BJ (cell line): ENCODE measurements at regions of chr22 and their contacts with region 1.

Region 1: DNA sequence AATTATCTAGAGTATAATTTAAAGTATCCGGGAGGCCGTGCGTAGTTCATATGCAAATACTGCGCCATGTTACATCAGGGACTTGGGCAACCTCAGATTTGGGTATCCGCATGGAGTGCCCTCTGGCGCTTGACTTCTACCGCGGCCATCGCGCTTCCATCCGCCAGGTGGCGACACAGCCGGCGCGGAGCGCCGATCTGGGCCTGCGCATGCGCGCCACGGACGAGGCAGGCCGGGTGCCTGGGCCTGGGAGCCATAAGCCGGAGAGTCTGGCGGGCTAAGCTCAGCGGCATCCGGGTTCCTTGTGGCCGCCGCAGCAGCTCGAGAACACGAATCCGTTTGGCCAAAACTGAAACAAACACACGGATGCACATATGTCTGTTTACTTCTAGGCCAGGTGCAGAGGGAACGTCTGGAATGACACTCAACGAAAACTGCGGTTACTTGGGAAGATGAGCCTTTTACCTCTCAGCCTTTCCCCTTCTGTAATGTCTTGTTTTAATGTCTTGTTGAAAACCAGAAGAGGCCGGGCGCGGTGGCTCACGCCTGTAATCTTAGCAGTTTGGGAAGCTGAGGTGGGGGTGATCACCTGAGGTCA is 21.9 kb downstream of the SNU13 start:
- DNase-seq: peak; percentile 47
- H3K4me3 ChIP-seq: peak overlapping the region; percentile 9
- H3K27me3 ChIP-seq: no peaks in the 10 kb centered on the region
- CTCF ChIP-seq: peak; percentile 99

Region 2: DNA sequence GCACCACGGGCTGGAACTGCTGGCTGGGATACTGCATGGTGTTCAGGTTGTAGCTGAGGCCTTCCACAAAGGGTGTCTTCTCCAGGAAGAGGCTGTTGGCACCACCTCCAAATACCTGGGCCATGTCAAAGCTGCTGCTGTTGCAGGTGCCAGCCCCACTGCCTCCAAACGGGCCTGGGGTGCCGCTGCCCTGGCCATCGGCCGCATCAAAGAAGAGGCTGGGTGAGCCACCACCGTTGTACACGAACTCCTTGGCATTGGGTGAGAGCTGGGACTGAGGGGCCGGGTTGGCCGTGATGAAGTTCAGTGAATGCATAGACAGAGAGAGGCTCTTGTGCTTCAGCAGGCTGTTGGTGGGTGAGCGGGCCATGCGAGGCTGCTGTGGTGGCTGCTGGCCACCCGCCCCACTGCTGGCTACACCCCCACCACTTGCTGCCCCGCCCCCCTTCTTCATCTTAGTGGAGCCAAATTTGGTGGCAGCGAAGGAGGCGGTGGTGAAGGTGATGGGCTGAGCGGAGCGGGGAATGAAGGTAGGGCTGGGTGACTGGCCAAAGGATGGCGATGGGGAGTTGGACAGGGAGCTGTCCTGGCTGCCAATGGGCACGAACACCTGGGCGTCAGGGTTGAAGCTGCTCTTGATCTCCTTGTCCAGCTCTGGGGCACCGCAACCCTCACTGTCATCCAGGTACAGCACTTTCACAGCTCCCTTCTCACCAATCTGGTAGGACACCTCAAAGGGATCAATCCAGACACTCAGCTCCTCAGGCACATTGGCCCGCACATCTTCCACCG is 230.2 kb before region 1 on chr22:
- CTCF ChIA-PET with region 1: no interaction called
- POLR2A ChIA-PET with region 1: no interaction called
- DNase-seq: no peak
- H3K4me3 ChIP-seq: no peak overlapping the region
- H3K27me3 ChIP-seq: no peaks in the 10 kb centered on the region
- CTCF ChIP-seq: no peak

Region 3: GRCh38 chr22:41642331-41643110 is 24.2 kb before region 1 on chr22:
- CTCF ChIA-PET with region 1: interaction called, 11 read pairs
- POLR2A ChIA-PET with region 1: no interaction called
- DNase-seq: no peak
- H3K4me3 ChIP-seq: no peak overlapping the region
- H3K27me3 ChIP-seq: no peaks in the 10 kb centered on the region
- CTCF ChIP-seq: no peak

Region 4: GRCh38 chr22:41656556-41656955 is 10.2 kb before region 1 on chr22:
- CTCF ChIA-PET with region 1: interaction called, 47 read pairs
- POLR2A ChIA-PET with region 1: no interaction called
- DNase-seq: no peak
- H3K4me3 ChIP-seq: no peak overlapping the region
- H3K27me3 ChIP-seq: no peaks in the 10 kb centered on the region
- CTCF ChIP-seq: no peak

Region 5: GRCh38 chr22:41688365-41689211 is 21.8 kb after region 1 on chr22 and contains the start of gene SNU13:
- CTCF ChIA-PET with region 1: interaction called, 14 read pairs
- POLR2A ChIA-PET with region 1: no interaction called
- DNase-seq: no peak
- H3K4me3 ChIP-seq: peak within 1 kb of the TSS; percentile 82
- H3K27me3 ChIP-seq: no peaks in the 10 kb centered on the region
- CTCF ChIP-seq: no peak
- polyA plus RNA-seq, gene SNU13: 288 and 327 TPM in 2 replicates

Region 6: GRCh38 chr22:41946629-41947423 is 280.1 kb after region 1 on chr22 and contains the start of gene CENPM:
- CTCF ChIA-PET with region 1: interaction called, 11 read pairs
- POLR2A ChIA-PET with region 1: no interaction called
- DNase-seq: peak; percentile 55
- H3K4me3 ChIP-seq: peak within 1 kb of the TSS; percentile 61
- H3K27me3 ChIP-seq: no peaks in the 10 kb centered on the region
- CTCF ChIP-seq: no peak
- polyA plus RNA-seq, gene CENPM: 18.6 and 30.4 TPM in 2 replicates